CD4-positive, alpha-beta T cell (primary cell): ENCODE measurements at regions of chr2 and their contacts with region 1.

Region 1: DNA sequence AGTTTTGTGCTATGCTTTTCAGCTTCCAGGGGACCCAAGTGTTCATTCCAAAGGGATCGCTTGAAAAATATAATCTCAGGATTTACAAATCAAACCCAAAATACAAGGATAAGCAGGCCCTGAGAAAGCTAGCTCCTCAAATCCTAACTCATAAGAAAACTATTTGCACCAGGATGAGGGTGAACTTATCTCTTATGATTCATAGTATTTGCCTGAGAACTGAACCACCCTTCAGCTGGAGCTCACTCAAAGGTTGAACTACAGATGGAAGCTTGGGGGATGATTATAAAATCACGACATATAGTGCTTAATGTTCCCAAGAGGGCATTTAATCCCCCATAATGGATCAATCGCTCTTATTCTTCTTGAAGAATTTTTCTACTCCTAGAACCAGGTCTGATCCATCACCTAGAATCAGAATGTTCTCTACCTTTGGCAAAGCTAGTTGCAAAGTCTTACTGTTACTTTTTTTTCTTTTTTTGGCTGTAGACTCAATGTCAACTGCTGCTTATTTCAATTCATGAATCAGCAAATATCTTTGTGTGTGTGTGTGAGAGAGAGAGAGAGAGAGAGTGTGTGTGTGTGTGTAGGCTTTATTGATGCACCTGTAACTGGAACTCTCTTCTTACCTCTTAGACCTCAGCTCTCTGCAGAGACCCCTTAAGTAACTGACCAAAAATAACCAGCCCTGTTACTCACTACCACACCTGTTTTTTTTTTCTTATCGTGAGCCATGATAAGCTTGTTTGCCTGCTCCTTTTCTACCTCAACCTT is 44.8 kb downstream of the ARL4C start:
- DNase-seq: peak in 4 of 14 experiments; percentile 20 to 64 (median 54)
- ATAC-seq: peak; percentile 10
- H3K4me3 ChIP-seq: peak overlapping the region; percentile 64
- H3K4me3 Mint-ChIP-seq: peak overlapping the region; percentile 89
- H3K27ac ChIP-seq: peak overlapping the region; percentile 56 to 93
- H3K27ac Mint-ChIP-seq: peak overlapping the region; percentile 92
- H3K4me1 ChIP-seq: peaks cover 73% of the 10 kb centered on the region
- H3K4me1 Mint-ChIP-seq: peaks cover 89% of the 10 kb centered on the region
- H3K27me3 ChIP-seq: no peaks in the 10 kb centered on the region
- H3K27me3 Mint-ChIP-seq: peaks cover 5% of the 10 kb centered on the region
- CTCF ChIP-seq: no peak

Region 2: GRCh38 chr2:234308813-234309195 is 143.2 kb before region 1 on chr2:
- CTCF ChIA-PET with region 1: interaction called, 3 read pairs
- POLR2A ChIA-PET with region 1: interaction called, 9 read pairs
- intact Hi-C with region 1: loop called in 1 of 2 experiments (anchors 1 kb)
- DNase-seq: peak; percentile 39 to 94 (median 56)
- ATAC-seq: peak; percentile 86
- H3K4me3 ChIP-seq: no peak overlapping the region
- H3K4me3 Mint-ChIP-seq: peak overlapping the region; percentile 68
- H3K27ac ChIP-seq: peak overlapping the region; percentile 50 to 56
- H3K27ac Mint-ChIP-seq: peak overlapping the region; percentile 88
- H3K4me1 ChIP-seq: peaks cover 25% of the 10 kb centered on the region
- H3K4me1 Mint-ChIP-seq: peaks cover 62% of the 10 kb centered on the region
- H3K27me3 ChIP-seq: no peaks in the 10 kb centered on the region
- H3K27me3 Mint-ChIP-seq: no peaks in the 10 kb centered on the region
- CTCF ChIP-seq: no peak

Region 3: GRCh38 chr2:234374736-234375135 is 77.3 kb before region 1 on chr2:
- CTCF ChIA-PET with region 1: no interaction called
- POLR2A ChIA-PET with region 1: interaction called, 11 read pairs
- intact Hi-C with region 1: loop called in 1 of 2 experiments (anchors 5 kb)
- DNase-seq: no peak
- ATAC-seq: no peak
- H3K4me3 ChIP-seq: no peak overlapping the region
- H3K4me3 Mint-ChIP-seq: no peak overlapping the region
- H3K27ac ChIP-seq: no peak overlapping the region
- H3K27ac Mint-ChIP-seq: peak overlapping the region; percentile 88
- H3K4me1 ChIP-seq: peaks cover 39% of the 10 kb centered on the region
- H3K4me1 Mint-ChIP-seq: peaks cover 59% of the 10 kb centered on the region
- H3K27me3 ChIP-seq: no peaks in the 10 kb centered on the region
- H3K27me3 Mint-ChIP-seq: no peaks in the 10 kb centered on the region
- CTCF ChIP-seq: no peak

Region 4: DNA sequence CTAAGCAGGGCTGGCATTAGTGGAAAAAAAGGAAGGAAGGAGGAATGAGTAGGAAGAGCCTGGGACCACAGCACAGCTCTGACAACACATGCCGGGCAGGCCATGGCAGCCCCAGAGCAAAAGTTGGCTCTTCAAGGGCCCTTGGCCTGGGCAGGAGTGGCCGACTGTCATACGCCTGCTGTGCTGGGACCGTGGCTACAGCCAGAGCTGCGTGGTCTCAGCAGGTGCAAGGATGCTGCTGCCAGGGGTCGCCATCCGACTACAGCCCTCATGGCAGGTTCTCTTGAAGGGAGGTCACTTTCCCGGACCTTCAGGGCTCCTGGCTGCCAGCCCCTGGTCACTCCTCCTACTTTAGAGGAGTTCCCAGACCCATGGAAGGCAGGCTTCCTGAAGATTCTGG is 65.1 kb before region 1 on chr2:
- CTCF ChIA-PET with region 1: no interaction called
- POLR2A ChIA-PET with region 1: no interaction called
- intact Hi-C with region 1: no loop called
- DNase-seq: no peak
- ATAC-seq: no peak
- H3K4me3 ChIP-seq: no peak overlapping the region
- H3K4me3 Mint-ChIP-seq: no peak overlapping the region
- H3K27ac ChIP-seq: no peak overlapping the region
- H3K27ac Mint-ChIP-seq: peak overlapping the region; percentile 40
- H3K4me1 ChIP-seq: peaks cover 3% of the 10 kb centered on the region
- H3K4me1 Mint-ChIP-seq: peaks cover 23% of the 10 kb centered on the region
- H3K27me3 ChIP-seq: no peaks in the 10 kb centered on the region
- H3K27me3 Mint-ChIP-seq: no peaks in the 10 kb centered on the region
- CTCF ChIP-seq: no peak

Region 5: DNA sequence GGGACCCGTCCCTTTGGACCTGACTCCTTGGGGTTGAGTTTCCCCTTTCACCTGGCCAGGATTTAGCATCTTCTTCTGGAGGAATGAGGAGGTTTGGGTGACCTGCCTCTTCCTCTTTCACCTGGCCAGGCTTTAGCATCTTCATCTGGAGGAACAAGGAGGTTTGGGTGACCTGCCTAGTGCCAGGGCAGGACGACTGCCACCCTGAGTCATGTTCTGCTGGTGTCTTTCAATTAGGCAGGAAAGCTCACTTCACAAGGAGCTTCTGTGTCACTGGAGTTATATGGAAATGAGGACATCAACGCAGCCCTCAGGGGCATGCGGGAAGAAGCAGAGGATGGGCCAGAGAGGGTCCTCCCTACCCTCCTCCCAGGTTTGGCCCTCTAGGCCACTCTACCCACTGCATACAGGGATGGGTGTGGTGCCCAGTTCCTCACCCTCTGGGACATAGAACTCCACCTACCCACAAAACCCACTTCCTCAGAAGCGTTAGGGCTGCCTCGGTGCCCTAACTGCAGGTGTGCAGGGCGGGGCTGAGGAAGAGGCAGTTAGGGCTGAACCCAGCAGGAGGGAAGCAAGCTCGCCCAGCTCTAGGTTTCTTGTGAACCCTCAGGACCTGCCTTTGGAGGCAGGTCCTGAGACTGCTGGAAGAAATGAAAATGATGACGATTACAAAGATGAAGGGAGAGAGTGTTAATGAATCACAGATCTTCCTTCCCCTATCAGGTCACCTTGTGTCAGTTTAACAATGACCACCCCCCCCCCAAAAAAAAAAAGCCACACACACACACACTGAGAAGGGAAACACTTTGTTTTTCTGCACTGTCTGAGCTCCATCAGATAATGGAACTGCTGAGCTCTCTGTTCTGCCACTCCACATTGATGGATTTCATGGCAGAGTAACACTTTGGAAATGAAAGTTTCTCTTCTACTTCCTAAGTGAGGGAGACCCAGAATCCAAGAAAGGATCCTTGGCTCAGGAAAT is 26.1 kb before region 1 on chr2:
- CTCF ChIA-PET with region 1: interaction called, 9 read pairs
- POLR2A ChIA-PET with region 1: interaction called, 376 read pairs
- intact Hi-C with region 1: loop called in 1 of 2 experiments (anchors 1 kb)
- DNase-seq: peak; percentile 70 to 95 (median 82)
- ATAC-seq: peak; percentile 70
- H3K4me3 ChIP-seq: peak overlapping the region; percentile 5
- H3K4me3 Mint-ChIP-seq: peak overlapping the region; percentile 88
- H3K27ac ChIP-seq: peak overlapping the region; percentile 78 to 87
- H3K27ac Mint-ChIP-seq: peak overlapping the region; percentile 97
- H3K4me1 ChIP-seq: peaks cover 90% of the 10 kb centered on the region
- H3K4me1 Mint-ChIP-seq: peaks cover 97% of the 10 kb centered on the region
- H3K27me3 ChIP-seq: no peaks in the 10 kb centered on the region
- H3K27me3 Mint-ChIP-seq: no peaks in the 10 kb centered on the region
- CTCF ChIP-seq: no peak

Region 6: GRCh38 chr2:234463626-234464290 is 11.7 kb after region 1 on chr2:
- CTCF ChIA-PET with region 1: interaction called, 4 read pairs
- POLR2A ChIA-PET with region 1: interaction called, 230 read pairs
- intact Hi-C with region 1: loop called in 1 of 2 experiments (anchors 1 kb)
- DNase-seq: peak; percentile 64 to 93 (median 77)
- ATAC-seq: peak; percentile 89
- H3K4me3 ChIP-seq: peak overlapping the region; percentile 25
- H3K4me3 Mint-ChIP-seq: peak overlapping the region; percentile 84
- H3K27ac ChIP-seq: peak overlapping the region; percentile 81 to 93
- H3K27ac Mint-ChIP-seq: peak overlapping the region; percentile 89
- H3K4me1 ChIP-seq: peaks cover 72% of the 10 kb centered on the region
- H3K4me1 Mint-ChIP-seq: peaks cover 82% of the 10 kb centered on the region
- H3K27me3 ChIP-seq: no peaks in the 10 kb centered on the region
- H3K27me3 Mint-ChIP-seq: no peaks in the 10 kb centered on the region
- CTCF ChIP-seq: no peak

Region 7: GRCh38 chr2:234483568-234484251 is 31.7 kb after region 1 on chr2:
- CTCF ChIA-PET with region 1: interaction called, 5 read pairs
- POLR2A ChIA-PET with region 1: interaction called, 88 read pairs
- intact Hi-C with region 1: loop called in 1 of 2 experiments (anchors 5 kb)
- DNase-seq: peak; percentile 62 to 96 (median 78)
- ATAC-seq: peak; percentile 76
- H3K4me3 ChIP-seq: peak overlapping the region; percentile 19
- H3K4me3 Mint-ChIP-seq: peak overlapping the region; percentile 68
- H3K27ac ChIP-seq: peak overlapping the region; percentile 68 to 81
- H3K27ac Mint-ChIP-seq: peak overlapping the region; percentile 98
- H3K4me1 ChIP-seq: peaks cover 74% of the 10 kb centered on the region
- H3K4me1 Mint-ChIP-seq: peaks cover 94% of the 10 kb centered on the region
- H3K27me3 ChIP-seq: no peaks in the 10 kb centered on the region
- H3K27me3 Mint-ChIP-seq: no peaks in the 10 kb centered on the region
- CTCF ChIP-seq: peak; percentile 80

Region 8: GRCh38 chr2:234494361-234495250 is 42.6 kb after region 1 on chr2:
- CTCF ChIA-PET with region 1: interaction called, 7 read pairs
- POLR2A ChIA-PET with region 1: interaction called, 265 read pairs
- intact Hi-C with region 1: loop called (anchors 1 to 2 kb)
- DNase-seq: peak in 8 of 14 experiments; percentile 21 to 80 (median 46)
- ATAC-seq: peak; percentile 33
- H3K4me3 ChIP-seq: peak overlapping the region; percentile 94
- H3K4me3 Mint-ChIP-seq: peak overlapping the region; percentile 98
- H3K27ac ChIP-seq: peak overlapping the region; percentile 70 to 96
- H3K27ac Mint-ChIP-seq: peak overlapping the region; percentile 98
- H3K4me1 ChIP-seq: peaks cover 42% of the 10 kb centered on the region
- H3K4me1 Mint-ChIP-seq: peaks cover 65% of the 10 kb centered on the region
- H3K27me3 ChIP-seq: no peaks in the 10 kb centered on the region
- H3K27me3 Mint-ChIP-seq: peaks cover 5% of the 10 kb centered on the region
- CTCF ChIP-seq: no peak